GM12878 (cell line): ENCODE measurements at regions of chr9 and their contacts with region 1.

Region 1: GRCh38 chr9:73132034-73132776 is 19.5 kb upstream of the ANXA1 start:
- DNase-seq: peak; percentile 55
- ATAC-seq: peak; percentile 89
- H3K4me3 ChIP-seq: peak overlapping the region; percentile 52
- H3K27ac ChIP-seq: peak overlapping the region; percentile 82
- H3K4me1 ChIP-seq: peaks cover 3% of the 10 kb centered on the region; the same call in 1 of the 2 replicates
- H3K27me3 ChIP-seq: no peaks in the 10 kb centered on the region
- CTCF ChIP-seq: no peak
- EP300 ChIP-seq: no peak
- POLR2A ChIP-seq: peak; percentile 55
- RAD21 ChIP-seq: no peak

Region 2: GRCh38 chr9:71758785-71759184 is 1373.4 kb before region 1 on chr9:
- CTCF ChIA-PET with region 1: no interaction called
- POLR2A ChIA-PET with region 1: no interaction called
- RAD21 ChIA-PET with region 1: no interaction called
- SMC1A ChIA-PET with region 1: no interaction called
- in situ Hi-C with region 1: no loop called
- intact Hi-C with region 1: no loop called
- DNase-seq: no peak
- ATAC-seq: no peak
- H3K4me3 ChIP-seq: no peak overlapping the region
- H3K27ac ChIP-seq: no peak overlapping the region
- H3K4me1 ChIP-seq: no peaks in the 10 kb centered on the region
- H3K27me3 ChIP-seq: no peaks in the 10 kb centered on the region
- CTCF ChIP-seq: no peak
- EP300 ChIP-seq: no peak
- POLR2A ChIP-seq: no peak
- RAD21 ChIP-seq: no peak

Region 3: DNA sequence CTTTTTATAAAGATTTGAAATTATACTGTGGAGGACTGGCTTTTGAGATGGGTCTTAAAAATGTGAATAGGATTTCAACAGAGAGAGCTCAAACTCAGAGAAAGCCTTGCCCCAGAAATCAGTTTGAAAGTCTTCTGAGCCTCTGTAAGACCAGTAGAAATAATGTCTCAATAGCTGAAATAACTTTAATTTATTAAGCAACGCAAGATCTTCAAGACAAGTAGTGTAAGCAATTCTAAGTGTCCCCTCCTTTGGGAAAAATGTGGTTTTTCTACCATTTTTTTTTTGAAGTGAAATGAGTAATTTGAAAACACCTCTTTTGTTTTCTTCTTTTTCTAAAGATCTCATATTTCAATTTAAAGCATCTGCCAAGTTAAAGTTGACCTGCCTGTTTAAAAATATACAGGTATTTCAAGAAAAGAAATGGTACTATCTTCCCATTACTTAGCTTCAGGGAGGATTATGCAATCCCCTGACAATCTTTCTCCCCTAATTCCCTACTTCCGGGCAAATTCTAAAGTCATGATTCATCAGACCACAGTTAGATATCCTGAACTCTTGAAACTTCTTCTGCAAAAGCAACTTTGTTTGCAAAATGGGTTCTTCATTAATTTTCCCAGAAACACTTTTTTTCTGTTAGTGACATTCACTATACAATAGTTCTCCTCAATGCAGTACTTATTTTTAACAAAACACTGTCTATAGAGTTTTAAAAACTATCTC is 11.6 kb after region 1 on chr9:
- CTCF ChIA-PET with region 1: interaction called, 18 read pairs
- POLR2A ChIA-PET with region 1: interaction called, 5 read pairs
- RAD21 ChIA-PET with region 1: interaction called, 5 read pairs
- SMC1A ChIA-PET with region 1: interaction called, 17 read pairs
- in situ Hi-C with region 1: no loop called
- intact Hi-C with region 1: no loop called
- DNase-seq: no peak
- ATAC-seq: no peak
- H3K4me3 ChIP-seq: no peak overlapping the region
- H3K27ac ChIP-seq: no peak overlapping the region
- H3K4me1 ChIP-seq: peaks cover 10% of the 10 kb centered on the region
- H3K27me3 ChIP-seq: no peaks in the 10 kb centered on the region
- CTCF ChIP-seq: no peak
- EP300 ChIP-seq: no peak
- POLR2A ChIP-seq: no peak
- RAD21 ChIP-seq: no peak

Region 4: DNA sequence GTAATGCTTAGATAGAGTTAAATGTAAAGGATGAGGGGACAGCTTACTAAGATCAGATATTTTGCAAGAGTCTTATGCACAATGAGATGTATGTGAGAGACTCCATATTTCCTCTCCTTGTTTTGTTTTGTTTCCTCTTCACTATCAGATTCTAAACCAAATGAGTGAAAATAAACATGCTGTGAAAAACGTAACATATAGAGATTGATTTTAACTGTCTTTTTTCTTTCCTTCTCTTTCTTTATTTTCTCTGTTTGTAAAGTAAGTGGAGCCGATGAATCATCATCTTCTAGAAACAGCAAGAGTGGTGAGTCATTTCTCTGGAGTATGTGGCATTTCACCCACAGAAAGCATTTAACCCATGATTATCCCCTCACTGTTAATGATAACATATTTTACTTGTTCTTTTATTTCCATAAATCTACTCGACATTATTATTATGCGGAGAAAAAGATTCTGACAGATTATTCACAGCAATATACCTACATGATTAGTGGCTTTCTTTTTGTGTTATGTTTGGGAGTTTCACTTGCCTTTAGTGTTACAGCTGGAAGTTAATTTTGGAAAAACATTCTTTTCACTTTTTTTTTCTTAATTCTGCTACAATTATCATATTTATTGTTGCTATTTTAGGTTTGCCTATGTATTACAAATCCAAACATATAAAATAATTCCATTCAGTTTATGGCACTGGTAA is 17.3 kb after region 1 on chr9:
- CTCF ChIA-PET with region 1: interaction called, 18 read pairs
- POLR2A ChIA-PET with region 1: interaction called, 8 read pairs
- RAD21 ChIA-PET with region 1: interaction called, 5 read pairs
- SMC1A ChIA-PET with region 1: interaction called, 17 read pairs
- in situ Hi-C with region 1: no loop called
- intact Hi-C with region 1: no loop called
- DNase-seq: peak; percentile 21
- ATAC-seq: peak; percentile 85
- H3K4me3 ChIP-seq: no peak overlapping the region
- H3K27ac ChIP-seq: no peak overlapping the region
- H3K4me1 ChIP-seq: peaks cover 10% of the 10 kb centered on the region
- H3K27me3 ChIP-seq: no peaks in the 10 kb centered on the region
- CTCF ChIP-seq: no peak
- EP300 ChIP-seq: peak in 1 of 2 experiments; percentile 47; a peak in 1 of 4 replicates
- POLR2A ChIP-seq: no peak
- RAD21 ChIP-seq: no peak

Region 5: DNA sequence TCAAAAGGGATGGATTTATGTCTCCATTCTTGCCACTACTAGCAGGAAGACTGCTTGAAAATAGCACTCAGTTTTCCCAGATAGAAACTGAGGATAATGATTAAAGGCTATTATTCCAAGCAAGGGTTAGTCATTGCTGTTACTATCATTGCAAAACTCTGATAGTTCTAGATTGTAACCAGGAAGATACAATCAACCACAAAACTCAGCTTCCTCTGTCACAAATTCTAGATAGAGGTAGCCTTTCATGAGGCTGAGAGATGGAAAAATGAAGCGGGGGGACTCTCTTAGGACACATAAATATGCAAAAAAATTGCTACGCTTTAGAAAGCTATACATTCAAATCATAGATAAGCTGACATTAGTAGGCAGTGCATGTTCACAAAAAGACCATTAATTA is 22.6 kb after region 1 on chr9:
- CTCF ChIA-PET with region 1: interaction called, 4 read pairs
- POLR2A ChIA-PET with region 1: interaction called, 8 read pairs
- RAD21 ChIA-PET with region 1: interaction called, 4 read pairs
- SMC1A ChIA-PET with region 1: interaction called, 17 read pairs
- in situ Hi-C with region 1: no loop called
- intact Hi-C with region 1: no loop called
- DNase-seq: no peak
- ATAC-seq: no peak
- H3K4me3 ChIP-seq: no peak overlapping the region
- H3K27ac ChIP-seq: no peak overlapping the region
- H3K4me1 ChIP-seq: no peaks in the 10 kb centered on the region; the same call in 1 of the 2 replicates
- H3K27me3 ChIP-seq: no peaks in the 10 kb centered on the region
- CTCF ChIP-seq: no peak
- EP300 ChIP-seq: no peak
- POLR2A ChIP-seq: no peak
- RAD21 ChIP-seq: no peak

Region 6: DNA sequence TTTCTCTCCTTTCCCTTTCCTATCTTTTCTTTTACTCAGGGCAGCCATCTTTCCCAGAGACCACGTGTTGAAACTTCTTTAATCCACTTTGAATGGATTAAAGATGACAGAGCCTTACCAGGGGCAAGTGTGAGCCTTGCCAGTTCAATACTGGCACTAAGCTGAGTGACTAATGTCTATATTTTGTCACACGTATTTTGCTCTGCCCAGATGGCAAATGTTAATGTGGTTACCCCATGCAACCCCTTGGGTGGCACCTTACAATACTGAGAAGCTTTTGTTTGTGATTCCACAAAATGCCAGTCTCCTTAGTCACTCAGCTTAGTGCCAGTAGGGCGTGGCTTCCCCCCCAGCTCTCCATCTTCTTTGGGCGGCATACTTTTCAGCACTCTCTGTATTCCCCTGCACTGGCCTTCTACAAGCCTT is 44.3 kb after region 1 on chr9:
- CTCF ChIA-PET with region 1: interaction called, 4 read pairs
- POLR2A ChIA-PET with region 1: no interaction called
- RAD21 ChIA-PET with region 1: interaction called, 3 read pairs
- SMC1A ChIA-PET with region 1: interaction called, 10 read pairs
- in situ Hi-C with region 1: no loop called
- intact Hi-C with region 1: no loop called
- DNase-seq: no peak
- ATAC-seq: no peak
- H3K4me3 ChIP-seq: no peak overlapping the region
- H3K27ac ChIP-seq: no peak overlapping the region
- H3K4me1 ChIP-seq: peaks cover 4% of the 10 kb centered on the region; the same call in 1 of the 2 replicates
- H3K27me3 ChIP-seq: no peaks in the 10 kb centered on the region
- CTCF ChIP-seq: no peak
- EP300 ChIP-seq: no peak
- POLR2A ChIP-seq: no peak
- RAD21 ChIP-seq: no peak